ENCODE measurements at regions of chr2 and their contacts with region 1.

Region 1: DNA sequence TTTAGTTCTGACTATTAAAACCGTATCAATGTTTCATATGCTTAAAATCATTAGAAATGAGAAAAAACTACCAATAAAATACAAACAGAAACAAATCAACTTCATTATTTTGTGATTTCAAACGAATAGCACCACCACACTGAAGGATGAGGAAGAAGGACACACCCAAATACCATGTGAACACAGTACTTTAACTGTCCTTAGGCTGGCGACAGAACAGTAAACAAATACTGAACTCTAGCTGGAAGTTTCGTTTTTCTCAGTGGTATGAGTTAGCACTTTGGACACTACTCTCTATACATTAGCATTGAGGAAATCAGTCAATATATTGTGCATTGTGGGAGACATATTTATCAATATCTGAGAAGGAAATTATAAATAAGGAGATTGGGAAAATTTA is 202.4 kb upstream of the AGAP1 start:
- DNase-seq: no peak
- ATAC-seq: no peak
- H3K4me3 ChIP-seq: no peak overlapping the region
- H3K27ac ChIP-seq: no peak overlapping the region
- H3K4me1 ChIP-seq: no peaks in the 10 kb centered on the region
- H3K27me3 ChIP-seq: no peaks in the 10 kb centered on the region

Region 2: GRCh38 chr2:235330775-235331451 is 39.5 kb after region 1 on chr2:
- intact Hi-C with region 1: no loop called
- DNase-seq: no peak
- ATAC-seq: no peak
- H3K4me3 ChIP-seq: no peak overlapping the region
- H3K27ac ChIP-seq: no peak overlapping the region
- H3K4me1 ChIP-seq: no peaks in the 10 kb centered on the region
- H3K27me3 ChIP-seq: no peaks in the 10 kb centered on the region

Region 3: GRCh38 chr2:235642446-235643098 is 351.1 kb after region 1 on chr2:
- intact Hi-C with region 1: loop called in 1 of 4 experiments (anchors 5 kb)
- DNase-seq: peak in 2 of 3 donors; percentile 51 to 76
- ATAC-seq: peak; percentile 32 to 57
- H3K4me3 ChIP-seq: no peak overlapping the region
- H3K27ac ChIP-seq: no peak overlapping the region
- H3K4me1 ChIP-seq: peaks cover 17% of the 10 kb centered on the region
- H3K27me3 ChIP-seq: no peaks in the 10 kb centered on the region